ENCODE measurements at regions of chr12 and their contacts with region 1.

Region 1: GRCh38 chr12:71746983-71747611 is 7.6 kb upstream of the RAB21 start:
- DNase-seq: peak; percentile 61

Region 2: DNA sequence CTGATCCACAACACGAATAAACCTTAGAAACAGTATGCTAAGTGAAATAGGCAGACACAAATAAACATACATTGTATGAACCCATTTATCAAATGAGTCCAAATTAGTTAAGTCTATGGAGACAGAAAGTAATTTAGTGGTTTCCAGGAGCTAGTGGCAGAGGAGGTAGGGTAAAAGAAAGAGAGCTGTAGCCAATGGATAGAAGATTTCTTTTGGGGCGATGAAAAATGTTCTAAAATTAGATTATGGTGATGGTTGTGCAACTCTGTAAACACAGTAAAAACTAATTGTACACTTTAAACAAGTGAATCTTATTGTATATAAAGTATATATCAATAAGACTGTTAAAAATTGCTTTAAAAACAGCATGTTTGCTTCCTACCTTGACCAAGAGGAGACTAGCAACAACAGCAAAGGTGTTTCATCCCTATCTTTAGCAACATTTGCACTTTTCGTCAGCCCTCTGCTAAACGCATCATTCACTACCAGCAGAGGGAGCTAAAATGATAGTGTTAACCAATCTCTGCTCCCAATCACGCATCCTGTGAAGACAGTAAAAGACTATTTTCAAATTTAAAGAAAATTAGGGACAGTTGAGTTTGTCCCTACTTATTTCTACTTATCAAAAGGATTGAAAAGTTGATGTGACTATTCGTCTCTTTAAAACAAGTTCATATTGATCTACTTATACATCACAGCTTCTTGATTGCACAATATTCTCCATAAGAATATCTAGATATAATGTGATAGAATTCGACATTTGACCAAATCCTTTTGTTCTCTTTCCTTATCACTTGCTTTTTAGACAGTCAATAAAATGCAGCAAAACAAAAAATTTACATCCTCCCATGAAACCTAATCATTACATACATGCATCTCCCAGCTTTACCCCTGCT is 331.5 kb before region 1 on chr12:
- in situ Hi-C with region 1: loop called (anchors 25 kb)
- DNase-seq: peak; percentile 74

Region 3: DNA sequence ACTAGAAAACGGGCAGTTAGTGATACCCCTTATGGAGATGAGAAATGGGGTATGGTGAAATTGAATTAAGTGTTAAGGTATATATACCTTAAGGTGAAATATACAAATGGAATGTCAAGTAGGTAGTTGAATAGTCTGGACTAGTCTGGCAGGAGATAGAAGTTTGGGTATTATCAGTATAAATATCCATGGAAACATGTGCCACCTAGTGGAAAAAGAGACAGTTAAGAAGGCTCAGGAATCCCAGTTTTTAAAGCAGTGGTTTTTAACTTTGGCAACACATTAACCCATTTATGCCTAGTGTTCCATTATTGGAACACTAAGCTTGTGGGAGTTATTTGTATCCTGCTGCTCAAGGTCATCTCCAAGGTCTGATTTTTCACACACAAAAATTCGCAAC is 153.0 kb after region 1 on chr12:
- in situ Hi-C with region 1: no loop called
- DNase-seq: no peak

Measured in KBM-7 (cell line).